ENCODE measurements at regions of chr6 and their contacts with region 1.

Region 1: GRCh38 chr6:31702819-31703522 is at the start of gene ABHD16A:
- DNase-seq: peak; percentile 93 to 99 (median 98)
- ATAC-seq: peak; percentile 93
- H3K4me3 ChIP-seq: peak within 1 kb of the TSS; percentile 83 to 98
- H3K4me3 Mint-ChIP-seq: peak within 1 kb of the TSS; percentile 99
- H3K27ac ChIP-seq: peak within 1 kb of the TSS; percentile 91 to 100
- H3K27ac Mint-ChIP-seq: peak within 1 kb of the TSS; percentile 92
- H3K4me1 ChIP-seq: peaks cover 22% of the 10 kb centered on the region
- H3K4me1 Mint-ChIP-seq: peaks cover 36% of the 10 kb centered on the region
- H3K27me3 ChIP-seq: no peaks in the 10 kb centered on the region
- H3K27me3 Mint-ChIP-seq: no peaks in the 10 kb centered on the region
- CTCF ChIP-seq: no peak
- total RNA-seq, gene ABHD16A: 79.6 to 81.6 TPM

Region 2: GRCh38 chr6:29864037-29864795 is 1838.8 kb before region 1 on chr6:
- CTCF ChIA-PET with region 1: no interaction called
- POLR2A ChIA-PET with region 1: no interaction called
- intact Hi-C with region 1: no loop called
- DNase-seq: no peak
- ATAC-seq: no peak
- H3K4me3 ChIP-seq: no peak overlapping the region
- H3K4me3 Mint-ChIP-seq: no peak overlapping the region
- H3K27ac ChIP-seq: no peak overlapping the region
- H3K27ac Mint-ChIP-seq: no peak overlapping the region
- H3K4me1 ChIP-seq: no peaks in the 10 kb centered on the region
- H3K4me1 Mint-ChIP-seq: no peaks in the 10 kb centered on the region
- H3K27me3 ChIP-seq: peaks cover 0 to 5% of the 10 kb centered on the region in 2 experiments
- H3K27me3 Mint-ChIP-seq: peaks cover 52% of the 10 kb centered on the region
- CTCF ChIP-seq: no peak

Region 3: DNA sequence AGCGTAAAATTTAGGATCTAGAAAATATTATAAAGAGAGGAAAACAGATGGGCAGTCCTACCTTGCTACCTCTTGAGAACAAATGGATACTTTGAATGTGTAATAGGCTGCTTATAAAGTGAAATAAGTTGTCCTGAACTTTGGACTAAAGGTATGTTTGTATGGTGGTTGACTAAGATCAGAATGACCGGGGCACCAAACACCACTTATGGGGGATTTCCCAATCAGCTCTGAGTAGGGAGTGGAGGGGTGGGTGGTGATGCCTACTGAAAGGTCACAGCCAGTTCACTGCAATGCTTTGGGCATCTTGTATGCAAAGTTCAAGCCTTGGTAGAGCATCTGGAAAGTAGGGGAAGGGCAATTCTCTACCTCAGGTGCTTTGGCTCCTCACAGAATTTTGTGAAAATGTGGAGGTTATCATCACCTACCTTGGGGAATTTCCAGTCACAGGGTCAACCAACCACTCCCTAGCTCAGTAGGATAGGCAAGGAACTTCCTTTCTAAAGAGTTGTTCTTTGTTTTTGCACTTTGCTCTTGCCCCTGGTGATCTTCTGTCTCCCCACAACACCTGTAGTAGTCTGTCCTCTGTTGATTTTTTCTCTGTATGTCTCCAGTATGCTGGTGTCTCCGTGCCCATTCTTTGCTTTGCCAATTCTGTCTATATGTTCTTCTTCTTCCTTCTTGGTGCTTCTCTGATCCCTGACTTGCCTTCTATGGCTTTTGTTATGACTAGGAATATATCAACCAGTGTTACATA is 1589.8 kb before region 1 on chr6 and contains the start of gene TRIM31:
- CTCF ChIA-PET with region 1: no interaction called
- POLR2A ChIA-PET with region 1: no interaction called
- intact Hi-C with region 1: no loop called
- DNase-seq: no peak
- ATAC-seq: no peak
- H3K4me3 ChIP-seq: no peak within 1 kb of the TSS
- H3K4me3 Mint-ChIP-seq: no peak within 1 kb of the TSS
- H3K27ac ChIP-seq: no peak within 1 kb of the TSS
- H3K27ac Mint-ChIP-seq: no peak within 1 kb of the TSS
- H3K4me1 ChIP-seq: no peaks in the 10 kb centered on the region
- H3K4me1 Mint-ChIP-seq: no peaks in the 10 kb centered on the region
- H3K27me3 ChIP-seq: peaks cover 2 to 6% of the 10 kb centered on the region in 2 experiments
- H3K27me3 Mint-ChIP-seq: peaks cover 46% of the 10 kb centered on the region
- CTCF ChIP-seq: no peak
- total RNA-seq, gene TRIM31: not detected

Region 4: GRCh38 chr6:31652925-31653718 is 49.8 kb before region 1 on chr6:
- CTCF ChIA-PET with region 1: no interaction called
- POLR2A ChIA-PET with region 1: interaction called, 17 read pairs
- intact Hi-C with region 1: loop called (anchors 1 kb)
- DNase-seq: peak in 4 of 9 experiments; percentile 77 to 92 (median 88)
- ATAC-seq: peak; percentile 70
- H3K4me3 ChIP-seq: peak overlapping the region; percentile 78 to 82
- H3K4me3 Mint-ChIP-seq: peak overlapping the region; percentile 92
- H3K27ac ChIP-seq: peak overlapping the region; percentile 94 to 96
- H3K27ac Mint-ChIP-seq: peak overlapping the region; percentile 100
- H3K4me1 ChIP-seq: peaks cover 32% of the 10 kb centered on the region
- H3K4me1 Mint-ChIP-seq: peaks cover 59% of the 10 kb centered on the region
- H3K27me3 ChIP-seq: no peaks in the 10 kb centered on the region
- H3K27me3 Mint-ChIP-seq: no peaks in the 10 kb centered on the region
- CTCF ChIP-seq: no peak

Region 5: DNA sequence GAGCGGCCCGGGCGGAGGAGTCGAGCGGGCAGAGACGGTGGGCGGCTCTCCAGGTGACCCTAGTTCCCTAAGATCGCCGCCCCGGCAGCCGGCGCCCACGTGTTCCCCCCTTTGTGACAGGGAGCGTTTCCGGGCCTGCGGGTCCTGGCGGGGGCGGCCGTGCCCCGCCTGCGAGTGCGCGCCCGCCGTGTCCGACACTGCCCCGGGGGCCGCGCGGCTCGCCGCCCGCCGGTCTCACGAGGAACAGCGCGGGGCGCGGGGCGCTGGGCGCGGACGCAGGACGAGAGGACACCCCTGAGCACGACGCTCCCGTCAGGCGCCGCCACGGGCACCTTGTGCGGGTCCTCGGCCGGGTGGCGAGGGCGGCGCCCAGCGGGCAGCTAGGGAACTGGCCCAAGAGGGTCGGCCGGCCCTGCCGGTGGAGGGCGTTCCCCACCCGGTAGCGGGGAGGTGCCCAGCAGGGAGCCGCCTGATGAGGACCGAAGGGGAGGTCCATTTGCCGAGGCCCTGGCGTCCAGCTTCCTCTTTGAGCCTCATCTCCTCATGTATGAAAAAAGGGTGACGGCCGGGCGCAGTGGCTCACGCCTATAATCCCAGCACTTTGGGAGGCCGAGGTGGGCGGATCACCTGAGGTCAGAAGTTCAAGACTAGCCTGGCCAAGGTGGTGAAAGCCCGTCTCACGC is 92.8 kb after region 1 on chr6 and contains the start of gene VARS1:
- CTCF ChIA-PET with region 1: no interaction called
- POLR2A ChIA-PET with region 1: no interaction called
- intact Hi-C with region 1: loop called in 1 of 2 experiments (anchors 1 kb)
- DNase-seq: peak; percentile 68 to 93 (median 83)
- ATAC-seq: peak; percentile 88
- H3K4me3 ChIP-seq: peak within 1 kb of the TSS; percentile 63 to 93
- H3K4me3 Mint-ChIP-seq: peak within 1 kb of the TSS; percentile 94
- H3K27ac ChIP-seq: peak within 1 kb of the TSS; percentile 74 to 83
- H3K27ac Mint-ChIP-seq: peak within 1 kb of the TSS; percentile 98
- H3K4me1 ChIP-seq: peaks cover 44% of the 10 kb centered on the region
- H3K4me1 Mint-ChIP-seq: peaks cover 44% of the 10 kb centered on the region
- H3K27me3 ChIP-seq: no peaks in the 10 kb centered on the region
- H3K27me3 Mint-ChIP-seq: no peaks in the 10 kb centered on the region
- CTCF ChIP-seq: peak; percentile 70
- total RNA-seq, gene VARS1: 29.8 to 33.3 TPM

Region 6: GRCh38 chr6:31834434-31835198 is 131.6 kb after region 1 on chr6:
- CTCF ChIA-PET with region 1: no interaction called
- POLR2A ChIA-PET with region 1: interaction called, 3 read pairs
- intact Hi-C with region 1: loop called in 1 of 2 experiments (anchors 1 kb)
- DNase-seq: peak; percentile 70 to 89 (median 81)
- ATAC-seq: peak; percentile 75
- H3K4me3 ChIP-seq: peak overlapping the region; percentile 84 to 97
- H3K4me3 Mint-ChIP-seq: peak overlapping the region; percentile 98
- H3K27ac ChIP-seq: peak overlapping the region; percentile 93 to 99
- H3K27ac Mint-ChIP-seq: peak overlapping the region; percentile 99
- H3K4me1 ChIP-seq: peaks cover 42% of the 10 kb centered on the region
- H3K4me1 Mint-ChIP-seq: peaks cover 59% of the 10 kb centered on the region
- H3K27me3 ChIP-seq: no peaks in the 10 kb centered on the region
- H3K27me3 Mint-ChIP-seq: no peaks in the 10 kb centered on the region
- CTCF ChIP-seq: no peak

Region 7: GRCh38 chr6:32127717-32128592 is 425.0 kb after region 1 on chr6 and contains the start of gene ATF6B:
- CTCF ChIA-PET with region 1: no interaction called
- POLR2A ChIA-PET with region 1: no interaction called
- intact Hi-C with region 1: loop called in 1 of 2 experiments (anchors 1 kb)
- DNase-seq: peak; percentile 90 to 100 (median 95)
- ATAC-seq: peak; percentile 94
- H3K4me3 ChIP-seq: peak within 1 kb of the TSS; percentile 81 to 88
- H3K4me3 Mint-ChIP-seq: peak within 1 kb of the TSS; percentile 99
- H3K27ac ChIP-seq: peak within 1 kb of the TSS; percentile 76 to 83
- H3K27ac Mint-ChIP-seq: peak within 1 kb of the TSS; percentile 97
- H3K4me1 ChIP-seq: peaks cover 31% of the 10 kb centered on the region
- H3K4me1 Mint-ChIP-seq: peaks cover 47% of the 10 kb centered on the region
- H3K27me3 ChIP-seq: no peaks in the 10 kb centered on the region
- H3K27me3 Mint-ChIP-seq: no peaks in the 10 kb centered on the region
- CTCF ChIP-seq: no peak
- total RNA-seq, gene ATF6B: 69.3 to 72.5 TPM

Measured in CD8-positive, alpha-beta T cell (primary cell).